Activated naive CD4-positive, alpha-beta T cell treated with anti-CD3 and anti-CD28 coated beads for 36 hours (primary cell): ENCODE measurements at regions of chr6 and their contacts with region 1.

Region 1: GRCh38 chr6:52419809-52420670 is at the start of gene EFHC1:
- DNase-seq: peak; percentile 99
- H3K4me3 Mint-ChIP-seq: no peak within 1 kb of the TSS
- H3K27ac Mint-ChIP-seq: peak within 1 kb of the TSS; percentile 88
- H3K4me1 Mint-ChIP-seq: peaks cover 22% of the 10 kb centered on the region
- H3K27me3 Mint-ChIP-seq: no peaks in the 10 kb centered on the region
- total RNA-seq, gene EFHC1: 1.2 to 3.1 TPM

Region 2: GRCh38 chr6:52381249-52381648 is 38.8 kb before region 1 on chr6:
- CTCF ChIA-PET with region 1: no interaction called
- intact Hi-C with region 1: no loop called
- DNase-seq: no peak
- H3K4me3 Mint-ChIP-seq: no peak overlapping the region
- H3K27ac Mint-ChIP-seq: no peak overlapping the region
- H3K4me1 Mint-ChIP-seq: peaks cover 75% of the 10 kb centered on the region
- H3K27me3 Mint-ChIP-seq: no peaks in the 10 kb centered on the region

Region 3: DNA sequence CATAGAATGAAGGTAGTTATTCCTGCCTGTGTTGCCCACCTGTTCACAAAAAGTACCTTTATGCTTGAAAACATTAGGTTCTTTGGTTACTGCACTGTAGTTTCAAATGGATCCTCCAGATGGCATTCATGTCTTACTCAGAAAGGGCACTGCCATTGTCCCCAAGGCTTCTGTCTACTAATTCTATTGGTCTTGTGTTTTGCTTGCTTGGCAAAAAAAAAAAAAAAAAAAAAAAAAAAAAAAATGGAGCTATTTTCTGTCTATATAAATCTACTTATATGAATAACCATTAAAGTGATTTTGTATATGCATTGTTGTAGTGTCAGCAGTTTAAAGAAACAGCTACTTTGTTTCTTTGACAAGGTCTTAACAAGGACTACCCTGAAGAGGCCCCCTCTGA is 12.6 kb before region 1 on chr6:
- CTCF ChIA-PET with region 1: interaction called, 21 read pairs
- intact Hi-C with region 1: no loop called
- DNase-seq: no peak
- H3K4me3 Mint-ChIP-seq: no peak overlapping the region
- H3K27ac Mint-ChIP-seq: no peak overlapping the region
- H3K4me1 Mint-ChIP-seq: peaks cover 26% of the 10 kb centered on the region
- H3K27me3 Mint-ChIP-seq: no peaks in the 10 kb centered on the region

Region 4: GRCh38 chr6:52435345-52435744 is 15.3 kb after region 1 on chr6:
- CTCF ChIA-PET with region 1: no interaction called
- intact Hi-C with region 1: no loop called
- DNase-seq: no peak
- H3K4me3 Mint-ChIP-seq: no peak overlapping the region
- H3K27ac Mint-ChIP-seq: no peak overlapping the region
- H3K4me1 Mint-ChIP-seq: peaks cover 3% of the 10 kb centered on the region
- H3K27me3 Mint-ChIP-seq: no peaks in the 10 kb centered on the region

Region 5: DNA sequence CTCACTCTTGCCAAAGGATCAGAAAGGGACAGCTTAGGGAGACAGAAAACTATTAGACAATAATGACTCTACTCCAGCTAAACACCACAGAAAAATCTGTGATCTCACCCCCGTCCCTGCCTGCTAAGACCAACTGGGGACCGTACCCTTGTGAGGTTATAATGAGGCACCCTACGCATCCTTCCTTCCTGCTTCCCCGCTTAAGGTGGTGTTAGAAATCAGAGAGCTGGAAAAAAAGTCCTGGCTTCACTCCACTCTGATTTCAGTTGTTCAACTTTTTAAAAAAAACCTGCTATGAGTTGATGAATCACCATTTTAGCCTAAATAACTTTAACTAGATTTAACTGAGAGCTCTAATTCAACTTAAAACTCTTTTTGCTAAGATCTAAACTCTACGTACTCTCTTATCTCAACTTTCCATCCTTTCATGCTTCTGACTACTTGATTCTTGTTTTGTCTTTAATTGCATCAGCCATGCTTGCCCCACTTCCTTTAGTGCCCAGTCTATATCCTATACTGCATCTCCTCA is 215.1 kb after region 1 on chr6:
- CTCF ChIA-PET with region 1: interaction called, 6 read pairs
- intact Hi-C with region 1: loop called (anchors 1 kb)
- DNase-seq: peak; percentile 75
- H3K4me3 Mint-ChIP-seq: peak overlapping the region; percentile 25
- H3K27ac Mint-ChIP-seq: peak overlapping the region; percentile 67
- H3K4me1 Mint-ChIP-seq: peaks cover 18% of the 10 kb centered on the region
- H3K27me3 Mint-ChIP-seq: peaks cover 5% of the 10 kb centered on the region

Region 6: GRCh38 chr6:52670502-52671409 is 250.7 kb after region 1 on chr6 and contains the start of gene TMEM14A:
- CTCF ChIA-PET with region 1: interaction called, 9 read pairs
- intact Hi-C with region 1: loop called (anchors 1 kb)
- DNase-seq: peak; percentile 93
- H3K4me3 Mint-ChIP-seq: peak within 1 kb of the TSS; percentile 82
- H3K27ac Mint-ChIP-seq: peak within 1 kb of the TSS; percentile 51
- H3K4me1 Mint-ChIP-seq: peaks cover 27% of the 10 kb centered on the region
- H3K27me3 Mint-ChIP-seq: no peaks in the 10 kb centered on the region
- total RNA-seq, gene TMEM14A: 10.4 to 11.0 TPM

Region 7: DNA sequence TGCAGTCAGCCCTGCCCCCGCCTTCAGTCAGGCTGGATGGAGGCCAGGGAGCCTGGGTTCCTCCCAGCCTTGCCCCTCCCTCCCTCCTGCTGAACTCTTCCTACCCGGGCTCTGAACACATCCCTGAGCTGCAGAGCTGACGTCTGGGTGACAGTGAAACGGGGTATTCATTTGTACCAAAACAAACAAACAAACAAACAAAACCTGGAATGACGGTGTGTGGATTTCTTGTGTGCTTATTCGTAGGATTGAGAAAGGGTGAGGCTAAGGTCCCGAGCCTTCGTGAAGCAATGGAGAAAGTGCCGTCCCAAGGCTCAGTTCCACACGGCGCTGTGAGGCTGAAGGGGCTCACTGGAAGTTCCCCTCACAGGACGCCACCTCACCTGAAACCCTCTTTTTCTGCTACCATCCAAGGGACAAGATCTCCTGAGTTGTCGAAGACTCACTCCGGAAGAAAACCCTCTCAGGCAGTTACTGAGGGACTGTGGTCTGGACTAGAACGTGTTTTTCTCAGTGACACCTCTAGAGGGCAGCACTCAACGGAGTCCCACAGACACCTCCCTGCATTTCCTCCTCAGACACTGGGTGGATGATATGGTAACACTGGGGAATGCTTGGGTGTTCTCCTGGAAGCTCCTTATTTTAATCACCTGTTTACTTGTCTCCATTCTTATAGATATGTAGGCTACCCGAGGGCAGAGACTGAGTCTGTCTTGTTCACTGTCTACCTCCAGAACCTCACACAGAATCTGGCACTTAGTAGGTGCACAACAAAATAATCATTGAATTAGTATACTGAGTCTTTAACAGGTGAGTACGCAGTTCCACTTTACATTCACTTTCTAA is 462.2 kb after region 1 on chr6:
- CTCF ChIA-PET with region 1: no interaction called
- intact Hi-C with region 1: loop called (anchors 5 kb)
- DNase-seq: peak; percentile 84
- H3K4me3 Mint-ChIP-seq: peak overlapping the region; percentile 71
- H3K27ac Mint-ChIP-seq: peak overlapping the region; percentile 27
- H3K4me1 Mint-ChIP-seq: peaks cover 5% of the 10 kb centered on the region
- H3K27me3 Mint-ChIP-seq: peaks cover 2% of the 10 kb centered on the region

Region 8: GRCh38 chr6:53484476-53485280 is 1064.6 kb after region 1 on chr6:
- CTCF ChIA-PET with region 1: no interaction called
- intact Hi-C with region 1: loop called (anchors 10 kb)
- DNase-seq: peak; percentile 86
- H3K4me3 Mint-ChIP-seq: no peak overlapping the region
- H3K27ac Mint-ChIP-seq: no peak overlapping the region
- H3K4me1 Mint-ChIP-seq: peaks cover 2% of the 10 kb centered on the region
- H3K27me3 Mint-ChIP-seq: peaks cover 33% of the 10 kb centered on the region